ENCODE measurements at regions of chr6 and their contacts with region 1.

Region 1: DNA sequence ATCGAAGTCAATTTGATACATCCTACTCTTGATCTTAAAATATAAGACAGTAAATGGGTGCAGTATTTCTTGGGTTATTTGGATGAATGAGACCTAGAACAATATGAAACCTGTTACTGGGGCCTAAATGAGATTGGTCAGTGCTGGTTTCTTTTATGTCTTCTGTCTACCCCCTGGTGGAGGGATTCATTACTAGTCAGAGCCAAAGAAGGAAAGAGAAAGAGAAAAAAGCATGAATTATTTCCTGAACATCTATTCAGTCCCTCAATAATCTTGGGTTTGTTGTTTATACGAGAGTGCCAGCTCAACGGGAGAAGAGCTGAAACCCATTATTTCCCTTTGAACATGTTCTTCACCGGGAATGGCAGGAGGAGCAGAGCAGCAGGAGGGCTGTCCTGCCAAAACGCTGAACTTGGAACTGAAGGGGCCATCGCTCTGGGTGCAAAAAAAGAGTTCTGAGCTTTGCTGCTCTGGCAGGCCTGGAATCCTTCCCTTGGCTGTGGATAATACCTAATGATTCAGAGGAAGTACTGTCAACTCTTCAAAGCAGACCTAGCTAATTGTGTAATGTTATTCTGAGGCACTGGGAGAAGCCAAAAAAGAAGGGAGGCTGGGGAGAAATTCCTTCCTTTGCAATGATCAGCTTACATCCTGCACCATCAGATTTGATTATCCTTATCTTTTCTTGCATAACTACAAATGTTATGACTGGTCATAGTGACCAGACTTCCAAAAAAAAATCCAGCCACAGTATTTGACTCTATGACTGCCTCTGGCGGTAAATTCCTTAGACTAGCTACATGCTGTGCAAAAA is 72.0 kb downstream of the BLOC1S5 start:
- DNase-seq: peak; percentile 43 to 64 (median 54)
- ATAC-seq: peak; percentile 85
- H3K4me3 ChIP-seq: no peak overlapping the region
- H3K27ac ChIP-seq: no peak overlapping the region
- H3K4me1 ChIP-seq: no peaks in the 10 kb centered on the region; a peak in 1 of 5 replicates
- H3K27me3 ChIP-seq: peaks cover 0 to 6% of the 10 kb centered on the region in 2 experiments
- CTCF ChIP-seq: peak; percentile 52 to 81 (median 64); a peak in 5 of 6 replicates
- EP300 ChIP-seq: no peak
- POLR2A ChIP-seq: no peak
- RAD21 ChIP-seq: peak; percentile 96 to 97

Region 2: GRCh38 chr6:7621761-7622160 is 370.4 kb before region 1 on chr6:
- CTCF ChIA-PET with region 1: interaction called, 4 read pairs
- POLR2A ChIA-PET with region 1: no interaction called
- in situ Hi-C with region 1: no loop called
- intact Hi-C with region 1: loop called (anchors 2 kb)
- DNase-seq: no peak
- ATAC-seq: no peak
- H3K4me3 ChIP-seq: no peak overlapping the region
- H3K27ac ChIP-seq: no peak overlapping the region
- H3K4me1 ChIP-seq: no peaks in the 10 kb centered on the region
- H3K27me3 ChIP-seq: peaks cover 41 to 50% of the 10 kb centered on the region in 2 experiments
- CTCF ChIP-seq: no peak
- EP300 ChIP-seq: no peak
- POLR2A ChIP-seq: no peak
- RAD21 ChIP-seq: no peak

Region 3: GRCh38 chr6:7673063-7673536 is 319.1 kb before region 1 on chr6:
- CTCF ChIA-PET with region 1: interaction called, 3 read pairs
- POLR2A ChIA-PET with region 1: no interaction called
- in situ Hi-C with region 1: no loop called
- intact Hi-C with region 1: loop called (anchors 5 kb)
- DNase-seq: peak; percentile 48 to 64 (median 60)
- ATAC-seq: peak; percentile 89
- H3K4me3 ChIP-seq: no peak overlapping the region
- H3K27ac ChIP-seq: no peak overlapping the region
- H3K4me1 ChIP-seq: peaks cover 10 to 11% of the 10 kb centered on the region in 2 experiments
- H3K27me3 ChIP-seq: peaks cover 2 to 19% of the 10 kb centered on the region in 2 experiments; a peak in 3 of 5 replicates
- CTCF ChIP-seq: peak; percentile 20 to 58 (median 33); a peak in 3 of 6 replicates
- EP300 ChIP-seq: no peak
- POLR2A ChIP-seq: no peak
- RAD21 ChIP-seq: peak in 1 of 2 experiments; percentile 55; a peak in 2 of 4 replicates

Region 4: DNA sequence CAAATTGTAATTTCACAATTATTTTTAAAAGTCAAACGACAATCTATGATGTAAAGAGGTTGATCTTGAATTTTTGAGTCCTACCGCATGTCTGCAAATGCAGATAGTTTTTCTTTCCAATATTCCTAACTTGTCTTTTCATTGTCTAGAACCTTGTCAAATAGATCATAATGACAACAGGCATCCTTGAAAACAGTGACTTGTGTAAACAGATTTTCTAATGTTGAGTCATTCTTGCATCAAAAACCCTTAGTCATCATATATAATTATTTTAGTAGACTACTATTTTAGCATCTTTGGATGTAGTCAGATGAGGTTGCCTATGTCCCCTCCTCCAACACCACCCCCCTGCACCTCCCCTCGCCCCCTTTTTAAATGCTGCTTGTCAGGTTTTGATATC is 222.5 kb before region 1 on chr6:
- CTCF ChIA-PET with region 1: no interaction called
- POLR2A ChIA-PET with region 1: no interaction called
- in situ Hi-C with region 1: no loop called
- intact Hi-C with region 1: no loop called
- DNase-seq: no peak
- ATAC-seq: no peak
- H3K4me3 ChIP-seq: no peak overlapping the region
- H3K27ac ChIP-seq: no peak overlapping the region
- H3K4me1 ChIP-seq: no peaks in the 10 kb centered on the region
- H3K27me3 ChIP-seq: peaks cover 29 to 64% of the 10 kb centered on the region in 2 experiments
- CTCF ChIP-seq: no peak
- EP300 ChIP-seq: no peak
- POLR2A ChIP-seq: no peak
- RAD21 ChIP-seq: no peak

Region 5: GRCh38 chr6:7819431-7820015 is 172.7 kb before region 1 on chr6:
- CTCF ChIA-PET with region 1: no interaction called
- POLR2A ChIA-PET with region 1: no interaction called
- in situ Hi-C with region 1: no loop called
- intact Hi-C with region 1: loop called (anchors 5 kb)
- DNase-seq: no peak
- ATAC-seq: no peak
- H3K4me3 ChIP-seq: no peak overlapping the region
- H3K27ac ChIP-seq: no peak overlapping the region
- H3K4me1 ChIP-seq: no peaks in the 10 kb centered on the region
- H3K27me3 ChIP-seq: peaks cover 26 to 42% of the 10 kb centered on the region in 2 experiments
- CTCF ChIP-seq: no peak
- EP300 ChIP-seq: no peak
- POLR2A ChIP-seq: no peak
- RAD21 ChIP-seq: no peak

Region 6: DNA sequence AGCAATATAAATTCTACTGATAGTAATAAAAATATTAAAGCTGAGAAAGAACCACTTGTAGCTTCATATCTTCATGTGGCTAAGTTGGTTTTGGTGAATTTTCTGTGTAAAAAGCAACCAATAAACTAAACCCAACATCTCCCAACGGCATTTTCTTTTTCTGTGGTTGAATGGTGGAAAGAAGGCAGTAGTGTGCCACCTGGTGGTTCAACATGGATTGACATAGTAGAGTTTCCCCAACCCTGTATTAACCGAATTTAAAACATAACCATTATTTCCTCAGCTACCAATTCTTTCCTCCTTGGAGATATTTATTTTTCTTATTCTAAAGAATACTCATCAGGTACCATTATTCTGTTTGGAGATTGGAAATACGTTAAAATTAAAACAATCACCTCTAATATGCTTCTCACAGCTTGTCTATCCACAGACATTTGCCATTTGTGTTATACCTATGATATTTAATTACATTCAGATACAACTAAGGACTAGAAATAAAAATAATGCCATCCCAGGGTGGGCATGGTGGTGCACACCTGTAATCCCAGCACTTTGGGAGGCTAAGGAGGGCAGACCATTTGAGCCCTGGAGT is 227.2 kb after region 1 on chr6:
- CTCF ChIA-PET with region 1: no interaction called
- POLR2A ChIA-PET with region 1: no interaction called
- in situ Hi-C with region 1: no loop called
- intact Hi-C with region 1: loop called (anchors 5 kb)
- DNase-seq: peak; percentile 61 to 71 (median 62)
- ATAC-seq: peak; percentile 95
- H3K4me3 ChIP-seq: no peak overlapping the region
- H3K27ac ChIP-seq: no peak overlapping the region
- H3K4me1 ChIP-seq: no peaks in the 10 kb centered on the region
- H3K27me3 ChIP-seq: peaks cover 0 to 10% of the 10 kb centered on the region in 2 experiments; a peak in 2 of 5 replicates
- CTCF ChIP-seq: peak; percentile 69 to 84 (median 69); a peak in 5 of 6 replicates
- EP300 ChIP-seq: no peak
- POLR2A ChIP-seq: no peak
- RAD21 ChIP-seq: peak; percentile 88 to 90

Measured in K562 (cell line).